ENCODE measurements at regions of chr14 and their contacts with region 1.

Region 1: DNA sequence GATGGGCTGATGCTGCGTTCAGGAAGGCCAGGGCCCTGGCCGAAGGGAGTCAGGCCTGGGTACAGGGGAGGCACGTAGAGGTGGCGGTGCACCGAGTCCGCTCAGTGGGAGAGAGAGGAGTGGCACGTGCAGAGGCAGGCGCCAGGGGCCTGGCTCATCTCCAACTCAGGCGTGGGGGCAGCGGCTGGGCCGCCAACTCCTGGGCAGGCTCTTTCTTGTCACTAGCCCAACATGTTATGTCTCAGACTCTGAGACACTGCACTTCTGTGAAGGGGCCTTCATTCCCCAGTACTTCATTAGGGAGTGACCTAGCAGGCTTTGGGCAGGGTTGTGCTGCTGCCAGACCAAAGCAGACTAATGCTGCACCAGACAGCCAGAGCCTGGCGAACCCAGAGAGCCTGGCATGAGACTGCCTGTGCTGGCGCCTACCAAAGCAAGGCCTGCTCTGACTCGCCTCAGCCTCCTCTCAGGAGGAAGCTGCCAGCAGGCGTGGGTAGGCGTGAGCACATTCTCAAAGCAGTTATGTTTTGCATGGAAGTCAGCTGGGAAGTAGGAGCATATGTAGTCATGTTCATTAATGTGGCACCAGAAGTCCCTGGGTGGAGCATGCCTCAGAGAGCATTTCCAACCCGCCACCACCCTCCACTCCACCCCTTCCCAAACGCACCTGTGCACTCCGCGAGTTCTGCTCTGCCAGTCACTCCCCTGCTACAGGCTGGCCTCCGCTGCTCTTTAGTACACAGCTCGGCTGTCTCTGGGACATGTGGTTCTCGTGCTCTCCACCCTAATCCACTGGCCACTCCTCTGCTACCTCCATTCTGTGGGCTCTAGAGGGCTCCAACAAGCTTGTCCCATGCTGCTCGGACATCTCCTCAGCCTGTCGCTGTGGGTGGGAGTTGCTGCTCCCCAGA is 9.7 kb downstream of the CKB start:
- DNase-seq: no peak
- ATAC-seq: peak; percentile 12 to 15; a peak in 3 of 6 replicates
- H3K4me3 ChIP-seq: no peak overlapping the region
- H3K27ac ChIP-seq: no peak overlapping the region
- H3K4me1 ChIP-seq: no peaks in the 10 kb centered on the region
- CTCF ChIP-seq: no peak
- EP300 ChIP-seq: no peak
- POLR2A ChIP-seq: no peak
- RAD21 ChIP-seq: no peak

Region 2: DNA sequence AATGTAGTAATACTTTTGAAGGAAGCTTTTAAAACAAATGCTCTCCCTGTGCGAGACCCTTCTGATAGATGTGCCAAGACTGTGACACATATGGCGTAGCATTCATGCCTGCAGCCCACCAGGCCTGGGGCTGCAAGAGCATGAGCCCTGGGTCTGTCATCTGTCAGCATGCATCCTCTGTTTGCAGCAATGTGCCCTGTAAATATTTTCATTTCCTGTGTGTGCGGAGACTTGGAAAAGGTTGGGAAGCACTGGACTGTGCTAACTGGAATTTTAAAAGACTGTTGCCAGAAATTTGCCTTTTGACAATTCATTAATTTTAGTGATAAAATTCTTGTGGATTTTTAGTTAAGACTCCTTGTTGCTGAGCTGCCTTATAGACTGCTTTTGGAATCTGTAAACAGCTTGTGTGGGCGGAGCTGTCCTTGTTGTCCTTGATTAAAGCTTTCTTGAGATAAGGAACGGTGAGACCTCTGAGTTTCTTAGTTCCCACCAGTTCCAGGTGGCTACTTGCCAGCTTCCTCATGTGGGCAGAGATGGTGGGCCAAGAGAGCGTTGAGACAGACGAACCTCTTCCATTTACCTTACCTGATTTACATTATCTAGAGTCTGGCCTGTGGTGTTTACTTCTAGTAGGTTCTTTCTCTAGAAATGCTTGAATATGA is 104.3 kb before region 1 on chr14:
- CTCF ChIA-PET with region 1: no interaction called
- POLR2A ChIA-PET with region 1: no interaction called
- DNase-seq: no peak
- ATAC-seq: no peak
- H3K4me3 ChIP-seq: no peak overlapping the region
- H3K27ac ChIP-seq: no peak overlapping the region
- H3K4me1 ChIP-seq: peaks cover 6% of the 10 kb centered on the region; the same call in 2 of the 3 replicates
- CTCF ChIP-seq: no peak
- EP300 ChIP-seq: no peak
- POLR2A ChIP-seq: no peak
- RAD21 ChIP-seq: no peak

Region 3: DNA sequence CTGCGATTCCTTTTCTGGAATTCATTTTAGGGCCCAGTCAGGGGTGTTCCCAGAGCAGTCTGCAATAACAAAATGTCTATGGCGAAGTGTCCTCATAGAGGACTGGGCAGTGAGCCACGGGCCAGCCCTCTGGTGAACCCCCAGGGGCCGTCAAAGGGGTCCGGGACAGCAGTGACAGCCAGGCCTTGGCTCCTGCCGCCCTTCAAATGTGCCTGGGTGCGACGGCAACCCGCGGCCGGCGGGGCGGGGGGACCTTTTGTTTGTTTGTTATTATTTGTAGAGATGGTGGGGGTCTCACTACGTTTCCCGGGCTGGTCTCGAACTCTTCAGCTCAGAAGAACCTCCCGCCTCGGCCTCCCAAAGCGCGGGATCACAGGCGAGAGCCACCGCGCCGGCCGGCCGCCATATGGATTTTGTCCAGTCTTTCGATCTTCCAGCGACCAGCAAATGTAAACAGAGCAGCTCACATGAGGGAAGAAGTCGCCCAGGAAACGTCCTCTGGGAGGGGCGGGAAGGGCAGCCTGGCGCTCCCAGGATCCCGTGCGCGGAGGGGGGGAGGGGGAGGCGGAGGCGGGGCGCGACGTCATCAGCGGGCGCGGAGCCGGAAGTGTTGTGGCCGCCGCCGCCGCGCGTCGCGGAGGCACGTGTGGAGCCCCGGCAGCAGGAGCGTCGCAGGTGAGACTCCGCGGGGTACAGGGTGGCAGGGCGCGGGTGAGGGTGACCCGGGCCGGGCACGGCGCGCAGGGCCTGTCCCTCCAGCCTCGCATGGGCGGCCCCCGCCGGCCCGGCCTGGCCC is 15.8 kb after region 1 on chr14 and contains the start of gene TRMT61A:
- CTCF ChIA-PET with region 1: interaction called, 489 read pairs
- POLR2A ChIA-PET with region 1: no interaction called
- DNase-seq: peak; percentile 89 to 95
- ATAC-seq: peak; percentile 62 to 79
- H3K4me3 ChIP-seq: peak within 1 kb of the TSS; percentile 100
- H3K27ac ChIP-seq: peak within 1 kb of the TSS; percentile 94 to 97
- H3K4me1 ChIP-seq: peaks cover 50% of the 10 kb centered on the region
- CTCF ChIP-seq: no peak
- EP300 ChIP-seq: no peak
- POLR2A ChIP-seq: peak; percentile 82
- RAD21 ChIP-seq: no peak
- polyA plus RNA-seq, gene TRMT61A: 8.3 TPM in 2 replicates

Region 4: DNA sequence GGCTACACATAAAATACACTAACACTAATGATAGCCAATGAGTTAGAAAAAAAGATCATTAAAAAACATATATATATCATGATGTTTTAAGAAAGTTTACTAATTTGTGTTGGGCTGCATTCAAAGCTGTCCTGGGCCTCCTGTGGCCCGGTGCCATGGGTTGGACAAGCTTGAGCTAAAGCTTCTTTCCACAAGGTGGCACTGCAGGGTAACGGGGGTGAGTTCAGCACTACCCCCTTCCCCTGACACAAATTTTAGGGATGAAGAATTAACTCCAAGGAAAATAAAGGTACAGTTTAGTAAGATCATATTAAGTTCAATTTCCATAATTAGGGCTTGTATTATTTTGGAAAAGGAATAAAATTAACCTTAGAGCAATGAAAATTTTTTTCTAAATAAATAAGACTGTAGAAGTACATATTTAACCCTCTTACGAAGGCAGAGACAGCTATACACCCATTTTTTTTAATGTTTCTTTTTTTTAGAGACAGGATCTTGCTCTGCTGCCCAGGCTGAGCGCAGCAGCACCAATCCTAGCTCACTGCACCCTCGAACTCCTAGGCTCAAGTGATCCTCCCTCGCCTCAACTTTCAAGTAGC is 295.5 kb after region 1 on chr14:
- CTCF ChIA-PET with region 1: no interaction called
- POLR2A ChIA-PET with region 1: no interaction called
- DNase-seq: peak; percentile 55 to 70
- ATAC-seq: peak; percentile 92 to 98
- H3K4me3 ChIP-seq: no peak overlapping the region
- H3K27ac ChIP-seq: no peak overlapping the region
- H3K4me1 ChIP-seq: no peaks in the 10 kb centered on the region
- CTCF ChIP-seq: peak; percentile 93
- EP300 ChIP-seq: no peak
- POLR2A ChIP-seq: no peak
- RAD21 ChIP-seq: peak; percentile 94 to 95

Measured in A549 (cell line).